ENCODE measurements at regions of chr20 and their contacts with region 1.

Region 1: DNA sequence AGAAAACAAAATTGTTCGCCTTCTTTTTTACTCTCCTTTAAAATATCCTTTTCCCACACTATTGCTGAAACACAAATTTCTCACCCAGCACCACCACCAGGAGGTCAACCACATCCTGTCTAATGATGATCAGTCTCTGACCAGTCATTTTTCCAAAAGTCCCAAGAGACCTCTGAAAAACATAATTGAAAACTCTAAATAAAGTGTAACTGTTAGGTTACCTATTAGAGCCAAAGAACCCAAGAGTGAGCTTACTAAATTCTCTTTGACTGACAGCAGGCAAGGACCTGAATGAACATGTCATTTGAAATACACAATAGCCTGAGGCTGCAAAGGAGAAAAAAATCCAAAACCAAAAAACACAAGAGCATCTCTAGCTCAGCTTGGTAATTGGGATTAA is 735.4 kb downstream of the CBLN4 start:
- DNase-seq: no peak
- ATAC-seq: no peak
- H3K4me3 ChIP-seq: no peak overlapping the region
- H3K4me3 Mint-ChIP-seq: no peak overlapping the region
- H3K27ac ChIP-seq: no peak overlapping the region
- H3K27ac Mint-ChIP-seq: no peak overlapping the region
- H3K4me1 ChIP-seq: no peaks in the 10 kb centered on the region
- H3K4me1 Mint-ChIP-seq: no peaks in the 10 kb centered on the region
- H3K27me3 ChIP-seq: no peaks in the 10 kb centered on the region
- H3K27me3 Mint-ChIP-seq: no peaks in the 10 kb centered on the region

Region 2: GRCh38 chr20:55200317-55200716 is 69.6 kb before region 1 on chr20:
- CTCF ChIA-PET with region 1: no interaction called
- POLR2A ChIA-PET with region 1: no interaction called
- intact Hi-C with region 1: loop called in 1 of 2 experiments (anchors 10 kb)
- DNase-seq: no peak
- ATAC-seq: no peak
- H3K4me3 ChIP-seq: no peak overlapping the region
- H3K4me3 Mint-ChIP-seq: no peak overlapping the region
- H3K27ac ChIP-seq: no peak overlapping the region
- H3K27ac Mint-ChIP-seq: no peak overlapping the region
- H3K4me1 ChIP-seq: no peaks in the 10 kb centered on the region
- H3K4me1 Mint-ChIP-seq: no peaks in the 10 kb centered on the region
- H3K27me3 ChIP-seq: no peaks in the 10 kb centered on the region
- H3K27me3 Mint-ChIP-seq: no peaks in the 10 kb centered on the region